K562 (cell line): ENCODE measurements at regions of chr4 and their contacts with region 1.

Region 1: GRCh38 chr4:52659001-52659721 is at the start of gene USP46:
- DNase-seq: peak; percentile 79 to 90 (median 88)
- ATAC-seq: peak; percentile 94
- H3K4me3 ChIP-seq: peak within 1 kb of the TSS; percentile 89
- H3K27ac ChIP-seq: peak within 1 kb of the TSS; percentile 85
- H3K4me1 ChIP-seq: peaks cover 12 to 21% of the 10 kb centered on the region in 2 experiments; a peak in 4 of 5 replicates
- H3K27me3 ChIP-seq: no peaks in the 10 kb centered on the region
- CTCF ChIP-seq: no peak
- EP300 ChIP-seq: no peak
- POLR2A ChIP-seq: peak; percentile 56
- RAD21 ChIP-seq: no peak
- polyA plus RNA-seq, gene USP46: 3.0 to 3.4 TPM

Region 2: DNA sequence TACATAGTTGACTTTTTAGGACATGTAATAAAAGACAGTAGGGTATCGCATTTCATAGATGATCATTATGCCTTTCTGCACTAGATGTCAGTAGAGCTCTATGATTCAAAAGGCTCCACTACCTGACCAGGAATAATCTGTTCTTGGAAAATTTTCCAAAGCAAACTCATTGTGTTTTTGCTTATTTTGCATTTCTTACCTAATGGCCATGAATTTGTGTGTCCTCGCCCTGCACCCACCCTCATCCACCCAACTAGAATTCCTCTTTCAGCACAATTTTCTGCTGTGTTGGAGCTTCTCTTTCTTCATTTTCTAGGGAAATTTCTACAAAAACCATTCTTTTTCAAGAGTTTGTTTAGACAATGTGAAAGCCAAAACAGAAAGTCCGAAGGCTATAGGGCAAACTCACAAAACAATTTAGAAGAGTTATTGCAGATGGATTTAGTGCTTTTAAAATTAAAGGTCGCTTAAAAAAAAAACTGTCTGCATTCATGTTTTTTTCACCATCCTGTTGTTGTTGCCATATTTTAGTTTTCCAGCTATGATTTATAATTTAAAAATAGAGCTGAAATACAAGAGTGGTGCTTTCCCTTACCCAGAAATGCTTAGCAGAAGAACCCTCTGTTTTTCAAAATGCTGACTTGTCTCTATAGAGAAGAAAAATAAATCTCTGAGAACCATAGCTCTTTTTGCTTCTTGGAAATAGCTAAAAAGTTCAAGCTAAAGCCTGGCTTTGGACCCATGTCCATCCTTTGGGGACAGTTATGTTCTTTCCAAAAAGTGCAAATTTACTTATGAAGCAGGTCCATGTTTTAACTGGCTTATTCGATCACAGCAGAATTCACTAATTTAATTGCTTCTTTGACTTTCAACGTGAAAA is 424.4 kb before region 1 on chr4:
- CTCF ChIA-PET with region 1: no interaction called
- POLR2A ChIA-PET with region 1: no interaction called
- in situ Hi-C with region 1: no loop called
- intact Hi-C with region 1: loop called (anchors 10 kb)
- DNase-seq: peak in 2 of 4 experiments; percentile 6
- ATAC-seq: peak; percentile 36; the same call in 1 of the 3 replicates
- H3K4me3 ChIP-seq: no peak overlapping the region
- H3K27ac ChIP-seq: no peak overlapping the region
- H3K4me1 ChIP-seq: no peaks in the 10 kb centered on the region
- H3K27me3 ChIP-seq: no peaks in the 10 kb centered on the region
- CTCF ChIP-seq: peak in 2 of 3 experiments; percentile 25 to 38; a peak in 3 of 6 replicates
- EP300 ChIP-seq: no peak
- POLR2A ChIP-seq: no peak
- RAD21 ChIP-seq: peak; percentile 17 to 49; a peak in 3 of 4 replicates

Region 3: GRCh38 chr4:52545099-52546069 is 113.8 kb before region 1 on chr4:
- CTCF ChIA-PET with region 1: no interaction called
- POLR2A ChIA-PET with region 1: no interaction called
- in situ Hi-C with region 1: loop called (anchors 10 kb)
- intact Hi-C with region 1: no loop called
- DNase-seq: peak; percentile 74 to 77 (median 76)
- ATAC-seq: peak; percentile 98
- H3K4me3 ChIP-seq: no peak overlapping the region
- H3K27ac ChIP-seq: no peak overlapping the region
- H3K4me1 ChIP-seq: no peaks in the 10 kb centered on the region; a peak in 1 of 5 replicates
- H3K27me3 ChIP-seq: peaks cover 2 to 4% of the 10 kb centered on the region in 2 experiments; a peak in 1 of 5 replicates
- CTCF ChIP-seq: peak; percentile 84 to 94 (median 92)
- EP300 ChIP-seq: no peak
- POLR2A ChIP-seq: no peak
- RAD21 ChIP-seq: peak; percentile 90 to 95

Region 4: DNA sequence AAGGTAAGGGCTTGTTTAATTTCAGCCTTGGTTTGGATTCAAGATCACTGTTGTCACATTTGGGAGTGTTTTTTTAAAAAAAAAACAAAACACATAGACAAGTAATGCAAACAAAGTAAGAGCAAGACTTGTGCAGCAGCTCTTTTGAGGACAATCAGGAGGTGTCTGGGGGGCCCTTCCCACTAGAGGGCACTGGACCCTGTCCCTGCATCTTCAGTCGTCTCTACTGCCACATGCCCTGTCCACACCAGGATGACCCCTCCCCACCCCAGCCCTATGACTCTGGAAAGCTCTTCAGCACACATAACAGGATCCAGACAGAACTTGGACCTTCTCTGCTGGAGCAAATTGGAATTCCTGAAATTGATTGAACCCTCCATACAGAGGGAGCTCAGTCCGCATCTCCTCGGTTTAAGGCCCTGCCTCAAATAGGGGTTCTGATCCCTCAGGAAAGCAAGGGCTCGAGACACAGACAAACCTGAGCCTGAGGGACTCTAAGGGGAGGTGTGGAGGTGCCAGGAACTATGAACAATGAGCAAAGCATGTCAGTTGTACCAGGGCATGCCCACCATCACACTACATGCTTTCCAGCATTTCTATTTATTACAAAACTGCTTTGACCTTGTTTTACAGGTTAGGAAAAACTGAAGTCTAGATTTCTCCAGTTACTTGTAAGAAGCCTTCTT is 70.9 kb before region 1 on chr4:
- CTCF ChIA-PET with region 1: no interaction called
- POLR2A ChIA-PET with region 1: no interaction called
- in situ Hi-C with region 1: no loop called
- intact Hi-C with region 1: loop called (anchors 5 kb)
- DNase-seq: peak; percentile 40 to 66 (median 52)
- ATAC-seq: peak; percentile 90
- H3K4me3 ChIP-seq: no peak overlapping the region
- H3K27ac ChIP-seq: no peak overlapping the region
- H3K4me1 ChIP-seq: no peaks in the 10 kb centered on the region; a peak in 2 of 5 replicates
- H3K27me3 ChIP-seq: no peaks in the 10 kb centered on the region; a peak in 1 of 5 replicates
- CTCF ChIP-seq: peak; percentile 59 to 71 (median 62)
- EP300 ChIP-seq: no peak
- POLR2A ChIP-seq: no peak
- RAD21 ChIP-seq: peak in 1 of 2 experiments; percentile 56; a peak in 2 of 4 replicates

Region 5: GRCh38 chr4:52648836-52649235 is 10.3 kb before region 1 on chr4:
- CTCF ChIA-PET with region 1: no interaction called
- POLR2A ChIA-PET with region 1: interaction called, 11 read pairs
- in situ Hi-C with region 1: no loop called
- intact Hi-C with region 1: no loop called
- DNase-seq: no peak
- ATAC-seq: no peak
- H3K4me3 ChIP-seq: no peak overlapping the region
- H3K27ac ChIP-seq: no peak overlapping the region
- H3K4me1 ChIP-seq: no peaks in the 10 kb centered on the region
- H3K27me3 ChIP-seq: no peaks in the 10 kb centered on the region
- CTCF ChIP-seq: no peak
- EP300 ChIP-seq: no peak
- POLR2A ChIP-seq: no peak
- RAD21 ChIP-seq: no peak

Region 6: DNA sequence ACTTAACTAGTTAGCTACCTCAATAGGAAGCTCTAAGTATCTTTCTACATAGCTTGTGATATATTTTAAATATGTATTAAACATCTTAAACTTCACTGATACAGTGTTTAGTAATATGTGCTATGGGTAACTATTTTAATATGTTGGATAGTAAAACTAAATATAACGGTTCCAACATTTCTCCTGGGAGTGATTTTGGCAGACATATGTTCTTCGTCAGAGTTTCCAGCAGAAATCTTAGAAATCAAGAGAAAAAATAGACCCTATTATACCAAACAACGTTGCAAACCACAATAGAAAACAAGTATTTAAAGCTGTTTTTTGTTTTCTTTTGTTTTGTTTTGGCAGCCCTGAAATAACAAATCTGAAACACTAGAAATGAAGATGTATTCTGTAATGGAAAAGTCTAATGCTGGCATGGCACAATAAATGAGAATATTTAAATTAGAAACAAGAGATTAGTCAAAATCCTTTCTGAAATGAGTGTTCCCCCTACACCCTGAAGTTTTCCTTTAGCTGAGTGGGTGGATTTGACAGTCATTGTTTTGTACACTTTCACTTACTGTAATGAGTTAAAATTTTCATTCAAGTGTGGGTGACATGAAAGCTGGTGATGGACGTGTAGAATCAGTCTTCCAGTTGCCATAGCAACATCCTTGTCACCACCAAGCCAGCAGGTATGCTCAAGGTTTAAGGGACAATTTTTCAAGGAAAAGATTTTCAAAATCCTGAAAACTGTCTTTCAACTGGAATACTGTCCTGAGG is 473.2 kb after region 1 on chr4:
- CTCF ChIA-PET with region 1: no interaction called
- POLR2A ChIA-PET with region 1: no interaction called
- in situ Hi-C with region 1: no loop called
- intact Hi-C with region 1: no loop called
- DNase-seq: no peak
- ATAC-seq: no peak
- H3K4me3 ChIP-seq: no peak overlapping the region
- H3K27ac ChIP-seq: no peak overlapping the region
- H3K4me1 ChIP-seq: no peaks in the 10 kb centered on the region
- H3K27me3 ChIP-seq: no peaks in the 10 kb centered on the region
- CTCF ChIP-seq: no peak
- EP300 ChIP-seq: no peak
- POLR2A ChIP-seq: no peak
- RAD21 ChIP-seq: no peak